Psoas muscle (tissue), 8 donors: ENCODE measurements at regions of chr7 and their contacts with region 1.

Region 1: GRCh38 chr7:127651556-127652332 is at the start of gene SND1:
- DNase-seq: peak; percentile 99
- ATAC-seq: peak; percentile 95 to 97 (median 96)
- H3K4me3 ChIP-seq: peak within 1 kb of the TSS; percentile 81
- H3K27ac ChIP-seq: peak within 1 kb of the TSS; percentile 99
- H3K4me1 ChIP-seq: peaks cover 30% of the 10 kb centered on the region
- H3K27me3 ChIP-seq: no peaks in the 10 kb centered on the region
- CTCF ChIP-seq: no peak
- total RNA-seq, gene SND1: 46.2 to 71.6 (median 53.4) TPM

Region 2: GRCh38 chr7:127585044-127585953 is 66.4 kb before region 1 on chr7 and contains the start of gene GCC1:
- intact Hi-C with region 1: loop called (anchors 2 to 5 kb)
- DNase-seq: peak; percentile 92 to 96
- ATAC-seq: peak; percentile 82 to 89 (median 86)
- H3K4me3 ChIP-seq: peak within 1 kb of the TSS; percentile 78
- H3K27ac ChIP-seq: peak within 1 kb of the TSS; percentile 92
- H3K4me1 ChIP-seq: peaks cover 60% of the 10 kb centered on the region
- H3K27me3 ChIP-seq: no peaks in the 10 kb centered on the region
- CTCF ChIP-seq: no peak
- total RNA-seq, gene GCC1: 8.2 to 12.4 (median 9.3) TPM

Region 3: DNA sequence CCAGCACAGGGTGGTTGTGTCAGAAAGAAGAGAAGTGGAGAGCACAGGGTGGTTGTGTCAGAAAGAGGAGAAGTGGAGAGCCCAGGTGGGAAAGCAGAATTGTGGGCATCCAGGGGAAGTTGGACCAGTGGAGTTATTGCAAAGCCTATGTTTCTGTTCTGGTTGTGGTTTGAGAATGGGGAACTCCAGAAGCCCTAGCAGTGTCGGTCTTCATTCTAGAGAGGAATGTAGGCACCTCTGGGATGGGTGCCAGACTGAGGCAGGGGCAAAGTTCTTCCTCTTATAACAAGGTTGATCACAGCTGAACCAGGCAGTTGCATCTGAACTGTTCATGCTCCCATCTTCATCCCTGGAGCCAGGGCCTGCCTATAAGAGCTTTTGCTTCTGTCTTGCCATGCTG is 57.3 kb before region 1 on chr7:
- intact Hi-C with region 1: loop called (anchors 2 to 5 kb)
- DNase-seq: no peak
- ATAC-seq: no peak
- H3K4me3 ChIP-seq: no peak overlapping the region
- H3K27ac ChIP-seq: no peak overlapping the region
- H3K4me1 ChIP-seq: peaks cover 1% of the 10 kb centered on the region
- H3K27me3 ChIP-seq: no peaks in the 10 kb centered on the region
- CTCF ChIP-seq: no peak